A549 (cell line): ENCODE measurements at regions of chr12 and their contacts with region 1.

Region 1: GRCh38 chr12:92987362-92987761 is 58.3 kb upstream of the EEA1 start:
- DNase-seq: peak; percentile 61 to 71
- ATAC-seq: peak; percentile 88 to 92; a peak in 5 of 6 replicates
- H3K4me3 ChIP-seq: no peak overlapping the region
- H3K27ac ChIP-seq: peak overlapping the region; percentile 6 to 37; a peak in 3 of 6 replicates
- H3K4me1 ChIP-seq: peaks cover 6% of the 10 kb centered on the region; the same call in 2 of the 3 replicates
- CTCF ChIP-seq: peak; percentile 74
- EP300 ChIP-seq: no peak
- POLR2A ChIP-seq: no peak
- RAD21 ChIP-seq: peak; percentile 88 to 90

Region 2: GRCh38 chr12:92784795-92785562 is 202.4 kb before region 1 on chr12:
- CTCF ChIA-PET with region 1: interaction called, 13 read pairs
- POLR2A ChIA-PET with region 1: no interaction called
- DNase-seq: peak; percentile 67 to 82
- ATAC-seq: peak; percentile 100
- H3K4me3 ChIP-seq: no peak overlapping the region
- H3K27ac ChIP-seq: no peak overlapping the region
- H3K4me1 ChIP-seq: peaks cover 8% of the 10 kb centered on the region; the same call in 1 of the 3 replicates
- CTCF ChIP-seq: peak; percentile 81
- EP300 ChIP-seq: no peak
- POLR2A ChIP-seq: no peak
- RAD21 ChIP-seq: peak; percentile 88 to 93

Region 3: DNA sequence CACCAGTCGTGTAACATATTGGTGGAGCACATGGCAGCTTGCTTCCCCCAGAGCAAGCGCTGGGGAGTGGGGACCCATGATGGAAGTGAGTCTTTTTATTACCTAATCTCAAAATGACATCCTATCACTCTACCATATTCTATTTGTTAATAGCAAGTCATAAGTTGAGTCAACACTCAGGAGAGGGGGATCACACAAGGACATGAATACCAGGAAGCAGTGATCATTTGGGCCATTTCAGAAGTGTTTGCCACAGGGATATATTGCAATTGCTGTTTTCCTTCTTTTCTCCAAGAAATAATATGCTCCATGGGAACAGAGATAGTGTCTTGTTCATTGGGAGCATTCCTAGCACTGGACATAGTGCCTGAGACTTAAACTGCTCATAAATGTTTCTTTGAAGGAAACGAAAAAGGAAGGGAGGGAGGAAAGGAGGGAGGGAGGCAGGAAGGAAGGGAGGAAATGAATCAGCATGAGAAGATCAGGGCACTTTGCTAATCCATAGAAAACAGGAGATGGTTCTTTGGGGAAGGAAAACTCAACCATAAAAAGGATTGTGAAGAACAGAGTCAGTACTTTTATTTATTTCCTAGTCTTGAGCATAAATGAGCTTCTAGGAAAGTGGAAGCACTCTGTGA is 19.1 kb before region 1 on chr12:
- CTCF ChIA-PET with region 1: interaction called, 71 read pairs
- POLR2A ChIA-PET with region 1: interaction called, 3 read pairs
- DNase-seq: no peak
- ATAC-seq: no peak
- H3K4me3 ChIP-seq: no peak overlapping the region
- H3K27ac ChIP-seq: peak overlapping the region; percentile 18 to 50; a peak in 3 of 6 replicates
- H3K4me1 ChIP-seq: peaks cover 37% of the 10 kb centered on the region
- CTCF ChIP-seq: no peak
- EP300 ChIP-seq: no peak
- POLR2A ChIP-seq: no peak
- RAD21 ChIP-seq: no peak

Region 4: DNA sequence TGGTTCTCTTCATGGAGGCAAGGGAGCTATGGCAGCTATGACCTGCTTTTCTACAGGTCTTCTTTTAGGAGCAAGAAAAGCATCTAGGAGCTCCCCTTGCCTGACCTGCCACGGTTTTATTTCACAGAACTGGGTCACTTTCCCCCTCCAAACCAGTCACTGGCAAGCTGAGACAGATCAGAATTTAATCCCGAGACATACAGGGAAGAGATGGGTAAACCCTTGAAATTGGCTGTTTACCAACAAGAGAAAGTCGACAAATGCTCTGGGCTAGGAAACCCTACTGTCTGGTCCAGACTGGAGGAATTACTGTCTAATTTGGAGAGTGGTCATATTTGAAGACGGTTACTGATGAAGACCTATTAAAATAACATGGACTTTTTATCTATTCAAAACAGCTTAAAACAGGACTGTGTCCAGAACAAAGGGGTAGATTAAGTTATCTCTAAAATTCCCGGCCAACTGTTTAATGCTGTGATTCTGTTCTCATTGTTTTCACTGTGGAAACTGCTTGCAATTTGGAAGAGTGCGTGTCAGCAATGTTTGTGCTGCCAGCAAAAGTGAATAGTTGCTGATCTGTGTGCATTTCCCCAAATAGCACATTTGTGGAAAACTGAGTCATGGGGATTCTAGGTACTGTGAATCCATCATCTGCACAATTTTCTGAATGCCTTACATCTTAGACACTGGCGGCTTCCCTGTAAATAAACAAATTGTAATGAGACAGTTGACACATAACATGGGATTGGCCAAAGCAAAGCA is 15.1 kb after region 1 on chr12:
- CTCF ChIA-PET with region 1: interaction called, 28 read pairs
- POLR2A ChIA-PET with region 1: no interaction called
- DNase-seq: no peak
- ATAC-seq: no peak
- H3K4me3 ChIP-seq: no peak overlapping the region
- H3K27ac ChIP-seq: no peak overlapping the region
- H3K4me1 ChIP-seq: no peaks in the 10 kb centered on the region
- CTCF ChIP-seq: no peak
- EP300 ChIP-seq: no peak
- POLR2A ChIP-seq: no peak
- RAD21 ChIP-seq: no peak

Region 5: GRCh38 chr12:93056971-93057535 is 69.7 kb after region 1 on chr12:
- CTCF ChIA-PET with region 1: no interaction called
- POLR2A ChIA-PET with region 1: no interaction called
- DNase-seq: no peak
- ATAC-seq: no peak
- H3K4me3 ChIP-seq: no peak overlapping the region
- H3K27ac ChIP-seq: no peak overlapping the region
- H3K4me1 ChIP-seq: no peaks in the 10 kb centered on the region
- CTCF ChIP-seq: no peak
- EP300 ChIP-seq: no peak
- POLR2A ChIP-seq: no peak
- RAD21 ChIP-seq: no peak

Region 6: GRCh38 chr12:93380480-93381121 is 393.2 kb after region 1 on chr12:
- CTCF ChIA-PET with region 1: interaction called, 67 read pairs
- POLR2A ChIA-PET with region 1: interaction called, 3 read pairs
- DNase-seq: peak in 1 of 2 experiments; percentile 40
- ATAC-seq: no peak
- H3K4me3 ChIP-seq: peak overlapping the region; percentile 64; the same call in 1 of the 3 replicates
- H3K27ac ChIP-seq: no peak overlapping the region
- H3K4me1 ChIP-seq: peaks cover 32% of the 10 kb centered on the region
- CTCF ChIP-seq: peak; percentile 45
- EP300 ChIP-seq: no peak
- POLR2A ChIP-seq: no peak
- RAD21 ChIP-seq: peak; percentile 58 to 59

Region 7: GRCh38 chr12:93397412-93397811 is 410.1 kb after region 1 on chr12:
- CTCF ChIA-PET with region 1: interaction called, 144 read pairs
- POLR2A ChIA-PET with region 1: interaction called, 5 read pairs
- DNase-seq: no peak
- ATAC-seq: no peak
- H3K4me3 ChIP-seq: no peak overlapping the region
- H3K27ac ChIP-seq: no peak overlapping the region
- H3K4me1 ChIP-seq: no peaks in the 10 kb centered on the region
- CTCF ChIP-seq: no peak
- EP300 ChIP-seq: no peak
- POLR2A ChIP-seq: no peak
- RAD21 ChIP-seq: no peak

Region 8: GRCh38 chr12:93419388-93420034 is 432.1 kb after region 1 on chr12:
- CTCF ChIA-PET with region 1: interaction called, 26 read pairs
- POLR2A ChIA-PET with region 1: interaction called, 3 read pairs
- DNase-seq: peak; percentile 58 to 59
- ATAC-seq: peak in 1 of 2 experiments; percentile 79; a peak in 3 of 6 replicates
- H3K4me3 ChIP-seq: no peak overlapping the region
- H3K27ac ChIP-seq: no peak overlapping the region
- H3K4me1 ChIP-seq: peaks cover 27% of the 10 kb centered on the region; the same call in 2 of the 3 replicates
- CTCF ChIP-seq: peak; percentile 73
- EP300 ChIP-seq: no peak
- POLR2A ChIP-seq: no peak
- RAD21 ChIP-seq: peak; percentile 41 to 50; a peak in 3 of 5 replicates